CD8-positive, alpha-beta T cell (primary cell): ENCODE measurements at regions of chr3 and their contacts with region 1.

Region 1: GRCh38 chr3:183635431-183636220 is at the start of gene KLHL24:
- DNase-seq: peak; percentile 82 to 95 (median 90)
- ATAC-seq: peak; percentile 73
- H3K4me3 ChIP-seq: peak within 1 kb of the TSS; percentile 88 to 97
- H3K4me3 Mint-ChIP-seq: peak within 1 kb of the TSS; percentile 94
- H3K27ac ChIP-seq: peak within 1 kb of the TSS; percentile 94 to 99
- H3K27ac Mint-ChIP-seq: peak within 1 kb of the TSS; percentile 97
- H3K4me1 ChIP-seq: peaks cover 25% of the 10 kb centered on the region
- H3K4me1 Mint-ChIP-seq: peaks cover 34% of the 10 kb centered on the region
- H3K27me3 ChIP-seq: no peaks in the 10 kb centered on the region
- H3K27me3 Mint-ChIP-seq: no peaks in the 10 kb centered on the region
- CTCF ChIP-seq: no peak
- total RNA-seq, gene KLHL24: 180 to 181 TPM

Region 2: DNA sequence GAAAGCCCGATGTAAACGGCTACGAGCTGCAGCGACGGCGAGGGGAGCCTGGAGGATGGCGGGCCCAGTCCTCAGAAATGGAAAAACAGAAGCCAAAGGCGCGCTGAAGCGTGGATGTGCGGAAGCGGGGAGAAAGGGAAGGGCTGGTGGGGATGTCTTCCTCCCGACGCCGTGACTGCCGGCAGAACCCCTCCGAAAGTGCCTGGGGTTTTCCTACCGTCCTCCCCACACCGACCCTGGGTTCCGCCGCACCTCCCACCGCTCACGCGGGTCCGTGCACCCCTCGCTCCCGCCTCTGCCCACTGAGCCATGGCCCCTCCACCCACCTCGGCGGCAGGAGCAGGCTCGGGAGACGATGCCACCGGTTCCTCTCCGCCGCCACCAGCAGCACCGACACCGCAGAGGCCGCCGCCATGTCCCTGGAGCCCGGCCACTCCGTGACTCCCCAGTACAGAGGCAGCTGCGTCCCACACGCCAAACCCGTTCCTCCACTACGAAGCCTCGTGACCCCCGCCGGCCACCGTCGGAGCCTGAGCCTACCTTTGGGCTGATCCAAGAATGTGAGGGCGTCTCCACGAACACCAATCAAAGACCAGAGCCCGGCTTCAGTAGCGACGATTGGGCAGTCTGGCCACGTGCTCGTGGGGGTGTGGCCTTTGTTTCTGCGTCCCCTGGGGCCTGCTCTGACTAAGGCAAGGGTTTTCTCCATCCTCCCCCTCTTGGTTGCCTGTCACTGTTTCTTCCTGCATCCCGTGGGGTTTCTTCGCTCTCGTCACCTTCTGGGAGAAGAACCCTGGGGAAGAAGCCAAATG is 536.4 kb before region 1 on chr3 and contains the start of gene MCCC1:
- CTCF ChIA-PET with region 1: no interaction called
- POLR2A ChIA-PET with region 1: no interaction called
- intact Hi-C with region 1: loop called in 1 of 2 experiments (anchors 5 kb)
- DNase-seq: peak; percentile 93 to 99 (median 97)
- ATAC-seq: peak; percentile 97
- H3K4me3 ChIP-seq: peak within 1 kb of the TSS; percentile 85 to 86
- H3K4me3 Mint-ChIP-seq: peak within 1 kb of the TSS; percentile 98
- H3K27ac ChIP-seq: peak within 1 kb of the TSS; percentile 72 to 76
- H3K27ac Mint-ChIP-seq: peak within 1 kb of the TSS; percentile 98
- H3K4me1 ChIP-seq: peaks cover 24% of the 10 kb centered on the region
- H3K4me1 Mint-ChIP-seq: peaks cover 43% of the 10 kb centered on the region
- H3K27me3 ChIP-seq: no peaks in the 10 kb centered on the region
- H3K27me3 Mint-ChIP-seq: no peaks in the 10 kb centered on the region
- CTCF ChIP-seq: no peak
- total RNA-seq, gene MCCC1: 12.8 to 25.9 TPM

Region 3: GRCh38 chr3:183515968-183516851 is 119.4 kb before region 1 on chr3:
- CTCF ChIA-PET with region 1: interaction called, 3 read pairs
- POLR2A ChIA-PET with region 1: interaction called, 6 read pairs
- intact Hi-C with region 1: loop called (anchors 1 to 2 kb)
- DNase-seq: peak; percentile 34 to 91 (median 71)
- ATAC-seq: peak; percentile 72
- H3K4me3 ChIP-seq: no peak overlapping the region
- H3K4me3 Mint-ChIP-seq: peak overlapping the region; percentile 24
- H3K27ac ChIP-seq: peak overlapping the region; percentile 56 to 68
- H3K27ac Mint-ChIP-seq: peak overlapping the region; percentile 92
- H3K4me1 ChIP-seq: peaks cover 66% of the 10 kb centered on the region
- H3K4me1 Mint-ChIP-seq: peaks cover 76% of the 10 kb centered on the region
- H3K27me3 ChIP-seq: no peaks in the 10 kb centered on the region
- H3K27me3 Mint-ChIP-seq: no peaks in the 10 kb centered on the region
- CTCF ChIP-seq: peak; percentile 31

Region 4: DNA sequence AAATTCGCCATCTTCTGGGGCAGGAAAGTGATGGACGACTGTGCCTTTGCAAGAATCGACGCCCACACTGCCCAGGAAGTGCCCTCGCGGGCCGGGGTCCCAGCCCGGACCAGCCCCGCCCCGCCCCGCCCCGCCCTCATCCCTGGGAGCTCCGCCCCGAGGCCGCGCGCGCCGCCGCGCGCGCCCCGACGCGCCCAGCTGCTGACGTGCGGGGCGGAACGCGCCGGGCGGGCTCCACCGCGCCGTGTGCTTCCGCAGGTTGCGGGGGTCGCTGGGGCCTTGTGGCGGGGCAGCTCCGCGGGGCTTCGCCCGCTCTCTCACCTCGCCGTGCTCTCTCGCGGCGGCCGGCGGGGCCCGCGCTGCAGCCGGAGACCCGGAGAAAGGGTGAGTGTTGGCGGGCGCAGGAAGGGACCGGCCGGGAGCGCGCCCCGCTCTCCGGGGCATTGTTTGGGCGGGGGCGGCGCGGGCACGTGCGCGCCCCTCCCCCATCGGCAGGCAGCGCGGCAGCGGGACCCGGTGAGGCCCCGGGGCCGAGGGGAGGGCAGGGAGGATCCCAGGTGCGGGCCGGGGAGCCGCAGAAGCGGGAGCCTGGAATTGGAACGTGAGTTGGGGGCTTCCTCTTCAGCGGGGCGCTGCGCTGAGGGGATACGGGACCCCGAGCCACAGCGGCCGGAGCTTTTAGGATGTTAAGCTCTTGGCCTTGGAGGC is 62.1 kb after region 1 on chr3 and contains the start of gene YEATS2:
- CTCF ChIA-PET with region 1: no interaction called
- POLR2A ChIA-PET with region 1: interaction called, 45 read pairs
- intact Hi-C with region 1: loop called (anchors 1 kb)
- DNase-seq: peak; percentile 28 to 85 (median 62)
- ATAC-seq: peak; percentile 86
- H3K4me3 ChIP-seq: peak within 1 kb of the TSS; percentile 90 to 93
- H3K4me3 Mint-ChIP-seq: peak within 1 kb of the TSS; percentile 99
- H3K27ac ChIP-seq: peak within 1 kb of the TSS; percentile 69 to 74
- H3K27ac Mint-ChIP-seq: peak within 1 kb of the TSS; percentile 94
- H3K4me1 ChIP-seq: peaks cover 19% of the 10 kb centered on the region
- H3K4me1 Mint-ChIP-seq: peaks cover 31% of the 10 kb centered on the region
- H3K27me3 ChIP-seq: no peaks in the 10 kb centered on the region
- H3K27me3 Mint-ChIP-seq: no peaks in the 10 kb centered on the region
- CTCF ChIP-seq: no peak
- total RNA-seq, gene YEATS2: 12.1 to 12.4 TPM

Region 5: GRCh38 chr3:184185461-184186308 is 550.1 kb after region 1 on chr3 and contains the start of gene ABCF3:
- CTCF ChIA-PET with region 1: no interaction called
- POLR2A ChIA-PET with region 1: no interaction called
- intact Hi-C with region 1: loop called in 1 of 2 experiments (anchors 5 kb)
- DNase-seq: peak; percentile 98 to 100 (median 99)
- ATAC-seq: peak; percentile 97
- H3K4me3 ChIP-seq: peak within 1 kb of the TSS; percentile 95 to 98
- H3K4me3 Mint-ChIP-seq: peak within 1 kb of the TSS; percentile 98
- H3K27ac ChIP-seq: peak within 1 kb of the TSS; percentile 82 to 83
- H3K27ac Mint-ChIP-seq: peak within 1 kb of the TSS; percentile 96
- H3K4me1 ChIP-seq: peaks cover 26% of the 10 kb centered on the region
- H3K4me1 Mint-ChIP-seq: peaks cover 42% of the 10 kb centered on the region
- H3K27me3 ChIP-seq: no peaks in the 10 kb centered on the region
- H3K27me3 Mint-ChIP-seq: no peaks in the 10 kb centered on the region
- CTCF ChIP-seq: no peak
- total RNA-seq, gene ABCF3: 192 to 193 TPM

Region 6: DNA sequence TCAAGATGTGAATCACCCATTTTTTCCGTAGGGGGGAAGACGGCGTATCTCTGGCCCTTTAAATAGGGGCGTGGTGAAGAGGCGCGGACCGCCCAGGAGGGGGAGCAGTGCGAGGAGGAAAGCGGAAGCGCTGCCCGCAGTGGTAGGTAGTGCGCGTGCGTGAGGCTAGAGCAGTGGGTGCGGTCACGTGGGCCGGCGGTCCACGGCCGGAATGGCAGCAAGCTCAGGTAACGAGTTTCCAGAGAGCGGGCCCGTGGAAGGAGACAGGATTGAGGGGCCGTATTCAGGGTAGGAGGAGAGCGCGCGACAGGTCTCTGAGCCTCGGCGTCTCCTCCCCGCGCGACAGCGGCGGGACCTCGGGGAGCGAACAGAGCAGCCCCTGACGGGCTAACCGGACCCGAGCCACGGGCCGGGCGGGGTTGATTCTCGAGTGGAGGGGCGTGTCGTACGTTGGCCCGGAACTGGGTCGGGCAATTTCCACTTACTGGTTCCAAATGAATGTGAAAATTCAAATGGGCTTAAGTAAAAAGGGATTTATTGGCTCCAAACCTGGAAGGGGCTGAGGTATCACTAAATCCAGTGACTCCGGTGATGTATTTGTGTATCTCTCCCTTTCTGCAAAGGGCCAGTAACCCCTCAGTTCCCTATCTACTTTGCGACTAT is 1176.5 kb after region 1 on chr3 and contains the start of gene VPS8:
- CTCF ChIA-PET with region 1: no interaction called
- POLR2A ChIA-PET with region 1: no interaction called
- intact Hi-C with region 1: loop called in 1 of 2 experiments (anchors 2 kb)
- DNase-seq: peak; percentile 92 to 98 (median 97)
- ATAC-seq: peak; percentile 82
- H3K4me3 ChIP-seq: peak within 1 kb of the TSS; percentile 64 to 86
- H3K4me3 Mint-ChIP-seq: peak within 1 kb of the TSS; percentile 99
- H3K27ac ChIP-seq: peak within 1 kb of the TSS; percentile 82 to 87
- H3K27ac Mint-ChIP-seq: peak within 1 kb of the TSS; percentile 99
- H3K4me1 ChIP-seq: peaks cover 46% of the 10 kb centered on the region
- H3K4me1 Mint-ChIP-seq: peaks cover 50% of the 10 kb centered on the region
- H3K27me3 ChIP-seq: no peaks in the 10 kb centered on the region
- H3K27me3 Mint-ChIP-seq: no peaks in the 10 kb centered on the region
- CTCF ChIP-seq: peak; percentile 42
- total RNA-seq, gene VPS8: 61.4 to 65.0 TPM